ENCODE measurements at regions of chr1 and their contacts with region 1.

Region 1: DNA sequence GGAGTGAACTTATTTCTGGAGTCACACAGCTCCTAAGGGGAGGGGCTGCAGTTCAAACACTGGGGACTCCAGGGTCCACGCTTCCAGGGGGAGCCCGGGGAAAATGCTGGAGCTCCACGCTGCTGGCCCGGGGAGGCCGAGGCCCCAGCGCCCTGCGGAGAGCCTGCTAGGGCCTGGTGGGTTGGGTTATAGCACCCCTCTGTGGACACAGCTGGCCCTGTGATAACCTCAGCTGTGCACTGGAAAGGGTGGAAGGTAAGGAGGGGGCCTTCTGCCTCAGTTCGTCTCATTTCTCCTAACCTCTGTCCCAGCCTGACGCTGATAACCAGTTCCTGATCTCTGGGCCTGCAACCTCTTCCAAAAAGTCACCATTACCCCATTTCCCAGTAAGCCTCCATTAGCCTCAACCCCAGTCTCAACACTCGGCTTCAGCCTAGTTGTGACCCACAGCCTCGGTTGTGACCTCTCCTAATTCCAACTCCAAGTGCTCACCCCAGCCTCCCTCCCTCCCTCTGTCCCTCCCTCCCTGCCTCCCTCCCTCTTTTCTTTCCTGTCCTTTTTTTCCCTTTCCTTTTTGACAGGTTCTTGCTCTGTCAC is 7.1 kb downstream of the NBL1 start:
- DNase-seq: peak in 1 of 2 experiments; percentile 68
- H3K4me3 ChIP-seq: no peak overlapping the region
- H3K4me1 ChIP-seq: peaks cover 2% of the 10 kb centered on the region
- H3K27me3 ChIP-seq: no peaks in the 10 kb centered on the region

Region 2: DNA sequence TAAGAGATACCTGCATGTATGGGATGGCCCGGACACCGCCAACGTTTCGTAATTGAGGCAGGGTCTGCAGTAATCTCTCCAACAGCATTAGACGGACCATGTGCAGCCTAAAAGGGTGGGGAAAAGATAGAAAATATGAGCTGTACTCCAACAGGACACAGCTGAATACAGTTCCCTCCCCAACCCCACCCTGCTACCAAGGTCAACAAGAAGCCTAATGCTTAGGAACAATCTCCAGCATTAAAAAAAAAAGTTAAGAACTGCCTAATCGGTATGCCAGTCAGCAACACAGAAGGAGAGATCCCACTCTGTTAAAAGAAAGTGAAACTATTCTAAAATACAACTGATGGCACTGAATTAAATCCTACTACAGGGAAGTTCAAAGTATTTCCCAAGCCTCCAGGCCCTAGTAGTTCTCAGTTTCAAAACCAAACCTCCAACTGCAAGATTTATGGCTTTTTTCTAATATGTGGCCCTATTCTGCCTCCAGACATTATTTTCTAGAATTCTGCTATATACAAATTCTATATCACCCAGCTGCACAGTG is 522.2 kb before region 1 on chr1:
- in situ Hi-C with region 1: no loop called
- DNase-seq: no peak
- H3K4me3 ChIP-seq: no peak overlapping the region
- H3K4me1 ChIP-seq: no peaks in the 10 kb centered on the region
- H3K27me3 ChIP-seq: no peaks in the 10 kb centered on the region

Region 3: GRCh38 chr1:19341201-19342072 is 309.8 kb before region 1 on chr1:
- in situ Hi-C with region 1: loop called (anchors 5 kb)
- DNase-seq: peak; percentile 65 to 90
- H3K4me3 ChIP-seq: no peak overlapping the region
- H3K4me1 ChIP-seq: no peaks in the 10 kb centered on the region
- H3K27me3 ChIP-seq: no peaks in the 10 kb centered on the region

Region 4: DNA sequence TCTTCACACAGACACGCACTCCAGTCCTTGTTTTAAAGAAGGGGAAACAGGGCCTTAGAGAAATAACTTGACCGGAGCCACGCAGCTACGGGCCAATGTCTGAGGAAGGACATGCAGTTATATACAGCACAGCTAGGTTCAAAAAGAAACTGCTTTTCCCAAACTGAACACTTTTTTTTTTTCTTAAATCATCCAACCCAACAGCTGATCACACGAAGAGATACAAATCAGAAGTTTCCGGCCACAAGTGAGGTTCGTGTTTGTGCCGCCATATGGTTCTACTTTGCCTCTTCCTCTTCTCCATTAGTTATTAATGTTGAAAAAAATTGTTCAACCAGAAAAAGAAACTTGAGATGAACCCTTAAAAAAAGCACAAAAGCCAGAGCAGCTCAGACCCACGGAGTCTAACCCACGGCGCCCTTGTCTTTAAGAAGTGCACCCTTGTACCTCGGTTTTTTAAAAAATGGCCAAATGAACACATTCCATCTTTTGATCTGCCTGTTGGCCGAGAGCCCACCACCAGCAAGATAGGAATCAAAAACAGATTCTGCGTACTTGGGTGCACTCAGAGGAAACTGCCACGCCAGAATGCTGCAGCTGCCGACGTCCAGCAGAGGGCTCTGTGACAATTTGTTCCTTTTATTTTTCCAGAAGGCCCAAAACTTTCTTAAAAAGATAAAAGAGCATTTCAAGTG is 260.2 kb before region 1 on chr1:
- in situ Hi-C with region 1: loop called (anchors 5 kb)
- DNase-seq: peak; percentile 28 to 66
- H3K4me3 ChIP-seq: no peak overlapping the region
- H3K4me1 ChIP-seq: no peaks in the 10 kb centered on the region
- H3K27me3 ChIP-seq: no peaks in the 10 kb centered on the region

Region 5: DNA sequence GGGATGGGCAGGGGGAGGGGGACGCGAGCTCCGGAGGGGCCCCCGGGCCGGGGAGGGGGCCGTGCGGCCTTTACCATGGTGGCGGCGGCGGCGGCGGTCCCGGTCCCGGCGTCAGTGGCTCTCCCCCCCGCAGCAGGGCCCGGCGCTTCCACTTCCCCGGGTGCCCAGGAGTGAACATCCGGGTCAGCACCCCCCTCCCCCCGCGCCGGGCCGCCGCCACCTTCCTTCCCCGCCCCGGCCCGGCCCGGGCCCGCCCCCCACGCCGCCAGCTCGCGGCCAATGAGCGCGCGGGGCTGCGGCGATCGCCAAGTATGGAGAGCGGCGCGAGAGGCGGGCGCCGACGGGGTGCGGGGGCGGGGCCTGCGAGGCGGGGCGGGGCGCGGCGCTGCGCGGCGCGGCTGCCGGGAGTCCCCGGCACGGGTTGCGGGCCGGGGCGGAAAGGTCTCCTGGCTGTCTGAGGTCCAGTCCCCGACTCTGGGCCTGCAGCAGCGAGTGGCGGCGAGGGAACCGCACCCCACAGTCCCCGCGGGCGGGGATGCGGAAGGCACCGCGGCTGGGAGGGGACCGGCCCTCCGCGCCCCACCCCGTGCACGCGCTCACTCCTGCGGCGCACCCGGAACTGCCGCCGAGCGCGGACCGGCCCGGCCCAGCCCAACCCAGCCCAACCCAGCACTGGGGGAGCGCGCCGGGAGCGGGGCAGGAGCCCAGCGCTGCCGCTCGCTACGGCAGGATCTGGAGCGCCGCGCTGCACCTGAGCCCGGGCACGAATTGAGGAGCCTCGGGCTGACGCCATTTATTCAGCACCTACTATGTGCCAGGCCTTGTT is 165.7 kb before region 1 on chr1 and contains the start of gene CAPZB:
- in situ Hi-C with region 1: loop called (anchors 10 kb)
- DNase-seq: peak; percentile 76 to 96
- H3K4me3 ChIP-seq: peak within 1 kb of the TSS; percentile 95
- H3K4me1 ChIP-seq: peaks cover 32% of the 10 kb centered on the region
- H3K27me3 ChIP-seq: no peaks in the 10 kb centered on the region